T-cell (primary cell): ENCODE measurements at regions of chr1 and their contacts with region 1.

Region 1: GRCh38 chr1:43073490-43074230 is 98.4 kb downstream of the EBNA1BP2 start:
- DNase-seq: peak; percentile 39 to 88 (median 67)
- ATAC-seq: peak; percentile 80 to 90 (median 86)
- H3K4me3 ChIP-seq: no peak overlapping the region
- H3K4me3 Mint-ChIP-seq: no peak overlapping the region
- H3K27ac ChIP-seq: no peak overlapping the region
- H3K27ac Mint-ChIP-seq: no peak overlapping the region
- H3K4me1 ChIP-seq: peaks cover 0 to 8% of the 10 kb centered on the region in 2 experiments
- H3K4me1 Mint-ChIP-seq: peaks cover 4 to 10% (median 6%) of the 10 kb centered on the region in 3 donors
- H3K27me3 ChIP-seq: no peaks in the 10 kb centered on the region
- H3K27me3 Mint-ChIP-seq: no peaks in the 10 kb centered on the region

Region 2: DNA sequence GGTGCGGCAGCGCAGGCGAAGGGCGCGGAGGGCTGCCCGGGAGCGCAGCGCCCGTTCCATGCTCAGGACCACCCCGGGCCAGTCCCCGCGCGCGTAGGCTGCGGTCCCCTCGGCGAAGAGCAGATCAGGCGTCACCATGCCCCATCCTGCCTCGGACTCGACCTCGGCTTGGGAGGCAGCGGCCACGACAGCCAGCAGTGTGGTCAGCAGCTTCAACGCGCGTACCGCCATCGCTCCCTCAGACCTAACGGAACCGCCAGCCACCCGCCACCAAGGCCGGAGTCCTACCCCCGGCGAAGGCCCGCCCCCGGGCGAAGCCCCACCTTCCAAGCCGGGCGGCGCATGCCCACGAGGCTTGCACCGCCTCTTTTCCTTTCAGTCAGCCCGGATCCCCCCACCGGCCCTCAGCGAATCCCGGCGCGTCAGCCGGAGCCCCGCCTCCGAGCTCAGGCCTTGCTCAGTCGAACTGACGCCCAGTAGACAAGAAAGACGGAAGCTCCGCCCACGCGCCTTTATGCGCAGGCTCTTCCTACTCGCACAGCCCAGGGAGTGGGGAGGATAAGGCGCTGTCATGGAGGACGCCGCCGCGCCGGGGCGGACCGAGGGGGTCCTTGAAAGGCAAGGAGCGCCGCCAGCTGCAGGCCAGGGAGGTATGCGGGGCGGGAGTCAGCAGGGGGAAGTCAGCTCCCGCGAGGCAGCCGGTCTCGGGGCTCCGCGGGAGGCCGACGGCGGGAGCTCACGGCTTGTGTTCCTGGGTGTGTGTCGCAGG is 306.7 kb before region 1 on chr1 and contains the starts of genes C1orf50 and P3H1:
- CTCF ChIA-PET with region 1: interaction called in 1 of 2 experiments, 10 read pairs
- POLR2A ChIA-PET with region 1: no interaction called
- DNase-seq: peak; percentile 99 to 100 (median 100)
- ATAC-seq: peak; percentile 92 to 96 (median 92)
- H3K4me3 ChIP-seq: peak within 1 kb of the TSS; percentile 81 to 86
- H3K4me3 Mint-ChIP-seq: no peak within 1 kb of the TSS
- H3K27ac ChIP-seq: peak within 1 kb of the TSS; percentile 66
- H3K27ac Mint-ChIP-seq: peak within 1 kb of the TSS; percentile 92
- H3K4me1 ChIP-seq: peaks cover 22 to 38% of the 10 kb centered on the region in 2 experiments
- H3K4me1 Mint-ChIP-seq: peaks cover 34 to 45% (median 36%) of the 10 kb centered on the region in 3 donors
- H3K27me3 ChIP-seq: no peaks in the 10 kb centered on the region
- H3K27me3 Mint-ChIP-seq: no peaks in the 10 kb centered on the region
- total RNA-seq, gene C1orf50: 12.4 to 15.3 (median 13.9) TPM
- total RNA-seq, gene P3H1: 23.5 to 62.9 (median 58.3) TPM

Region 3: DNA sequence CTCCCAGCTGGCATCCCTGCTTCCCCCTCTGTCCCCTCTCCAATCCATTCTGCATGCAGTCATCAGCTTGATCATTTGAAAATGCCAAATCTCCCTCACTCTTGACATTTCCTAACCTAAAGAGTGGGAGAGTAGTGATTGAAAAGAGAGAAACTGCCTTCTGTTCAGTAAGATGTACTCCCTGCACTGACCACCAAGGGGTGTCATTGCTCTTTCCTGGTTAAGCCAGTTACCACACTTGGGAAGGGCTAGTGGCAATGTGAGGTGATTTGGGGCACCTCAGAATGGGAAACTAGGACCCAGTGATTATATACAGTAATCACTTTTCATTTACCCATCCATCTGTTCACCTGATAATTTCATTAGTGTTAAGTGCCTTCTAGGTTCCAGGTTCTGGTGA is 295.8 kb before region 1 on chr1:
- CTCF ChIA-PET with region 1: interaction called, 5 to 33 read pairs
- POLR2A ChIA-PET with region 1: no interaction called
- DNase-seq: peak in 11 of 35 experiments; percentile 7 to 57 (median 17)
- ATAC-seq: peak; percentile 37 to 62 (median 39)
- H3K4me3 ChIP-seq: no peak overlapping the region
- H3K4me3 Mint-ChIP-seq: no peak overlapping the region
- H3K27ac ChIP-seq: no peak overlapping the region
- H3K27ac Mint-ChIP-seq: peak overlapping the region in 1 of 2 donors; percentile 55
- H3K4me1 ChIP-seq: no peaks in the 10 kb centered on the region
- H3K4me1 Mint-ChIP-seq: peaks cover 9 to 16% (median 12%) of the 10 kb centered on the region in 3 donors
- H3K27me3 ChIP-seq: no peaks in the 10 kb centered on the region
- H3K27me3 Mint-ChIP-seq: no peaks in the 10 kb centered on the region

Region 4: DNA sequence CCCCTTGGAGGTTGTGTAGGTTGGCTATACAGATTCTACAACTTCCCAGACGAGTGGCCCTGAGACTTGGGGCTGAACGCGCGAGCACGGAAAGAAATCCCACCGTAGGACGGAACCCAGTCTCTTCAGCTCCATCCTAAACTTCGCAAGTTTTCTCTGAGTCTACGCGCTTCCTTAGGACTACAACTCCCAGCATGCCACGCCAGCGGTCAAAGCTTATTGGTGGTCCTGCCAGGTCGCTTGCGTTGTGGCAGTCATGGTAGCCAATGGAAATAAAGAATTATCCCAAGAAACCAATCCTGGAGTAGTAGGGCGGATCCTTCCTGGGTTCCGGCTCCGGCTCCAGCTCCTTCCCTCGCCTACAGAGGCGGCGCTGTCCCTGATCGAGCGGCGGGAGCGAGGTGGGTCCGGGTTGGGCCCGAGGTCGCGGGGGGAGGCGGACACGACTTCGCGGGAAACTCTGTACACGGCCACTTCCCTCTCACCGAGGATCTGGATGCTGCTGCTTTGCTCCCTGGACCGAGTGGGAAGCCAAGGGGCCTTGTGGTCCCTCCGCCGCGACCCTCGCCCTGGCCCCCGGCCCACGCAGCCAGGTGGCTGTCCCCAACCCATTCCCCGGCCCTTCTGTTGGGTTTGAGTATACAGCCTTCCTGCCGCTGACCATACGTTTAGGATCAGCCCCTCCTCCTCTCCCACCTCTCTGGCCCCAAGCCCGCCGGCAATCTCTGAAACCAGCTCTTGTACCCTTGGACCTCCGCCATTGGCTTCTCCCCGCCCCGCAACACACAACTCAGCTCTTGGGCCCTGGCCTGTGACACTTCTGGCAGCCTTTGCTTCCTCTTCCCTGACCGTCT is 227.2 kb before region 1 on chr1 and contains the start of gene ZNF691:
- CTCF ChIA-PET with region 1: interaction called in 1 of 2 experiments, 11 read pairs
- POLR2A ChIA-PET with region 1: interaction called in 1 of 2 experiments, 4 read pairs
- DNase-seq: peak; percentile 65 to 94 (median 84)
- ATAC-seq: peak; percentile 98 to 99 (median 98)
- H3K4me3 ChIP-seq: peak within 1 kb of the TSS; percentile 72 to 90
- H3K4me3 Mint-ChIP-seq: peak within 1 kb of the TSS; percentile 86 to 94 (median 89)
- H3K27ac ChIP-seq: peak within 1 kb of the TSS; percentile 32
- H3K27ac Mint-ChIP-seq: peak within 1 kb of the TSS; percentile 73 to 94
- H3K4me1 ChIP-seq: peaks cover 4 to 21% of the 10 kb centered on the region in 2 experiments
- H3K4me1 Mint-ChIP-seq: peaks cover 35 to 40% (median 36%) of the 10 kb centered on the region in 3 donors
- H3K27me3 ChIP-seq: no peaks in the 10 kb centered on the region
- H3K27me3 Mint-ChIP-seq: no peaks in the 10 kb centered on the region
- total RNA-seq, gene ZNF691: 4.7 to 14.9 (median 13.0) TPM

Region 5: GRCh38 chr1:42913426-42914091 is 160.1 kb before region 1 on chr1:
- CTCF ChIA-PET with region 1: interaction called, 48 to 290 read pairs
- POLR2A ChIA-PET with region 1: interaction called in 1 of 2 experiments, 8 read pairs
- DNase-seq: peak in 30 of 35 experiments; percentile 30 to 87 (median 57)
- ATAC-seq: peak; percentile 66 to 84 (median 78)
- H3K4me3 ChIP-seq: no peak overlapping the region
- H3K4me3 Mint-ChIP-seq: no peak overlapping the region
- H3K27ac ChIP-seq: no peak overlapping the region
- H3K27ac Mint-ChIP-seq: no peak overlapping the region
- H3K4me1 ChIP-seq: no peaks in the 10 kb centered on the region
- H3K4me1 Mint-ChIP-seq: peaks cover 0 to 4% (median 4%) of the 10 kb centered on the region in 3 donors
- H3K27me3 ChIP-seq: peaks cover 0 to 6% of the 10 kb centered on the region in 2 experiments
- H3K27me3 Mint-ChIP-seq: no peaks in the 10 kb centered on the region

Region 6: GRCh38 chr1:42924082-42924850 is 149.4 kb before region 1 on chr1:
- CTCF ChIA-PET with region 1: interaction called, 14 to 97 read pairs
- POLR2A ChIA-PET with region 1: no interaction called
- DNase-seq: peak; percentile 72 to 93 (median 88)
- ATAC-seq: peak; percentile 91 to 93 (median 92)
- H3K4me3 ChIP-seq: peak overlapping the region; percentile 83 to 90
- H3K4me3 Mint-ChIP-seq: peak overlapping the region; percentile 82 to 95 (median 86)
- H3K27ac ChIP-seq: peak overlapping the region; percentile 75
- H3K27ac Mint-ChIP-seq: peak overlapping the region; percentile 94 to 97
- H3K4me1 ChIP-seq: peaks cover 9 to 25% of the 10 kb centered on the region in 2 experiments
- H3K4me1 Mint-ChIP-seq: peaks cover 21 to 41% (median 34%) of the 10 kb centered on the region in 3 donors
- H3K27me3 ChIP-seq: no peaks in the 10 kb centered on the region
- H3K27me3 Mint-ChIP-seq: no peaks in the 10 kb centered on the region

Region 7: DNA sequence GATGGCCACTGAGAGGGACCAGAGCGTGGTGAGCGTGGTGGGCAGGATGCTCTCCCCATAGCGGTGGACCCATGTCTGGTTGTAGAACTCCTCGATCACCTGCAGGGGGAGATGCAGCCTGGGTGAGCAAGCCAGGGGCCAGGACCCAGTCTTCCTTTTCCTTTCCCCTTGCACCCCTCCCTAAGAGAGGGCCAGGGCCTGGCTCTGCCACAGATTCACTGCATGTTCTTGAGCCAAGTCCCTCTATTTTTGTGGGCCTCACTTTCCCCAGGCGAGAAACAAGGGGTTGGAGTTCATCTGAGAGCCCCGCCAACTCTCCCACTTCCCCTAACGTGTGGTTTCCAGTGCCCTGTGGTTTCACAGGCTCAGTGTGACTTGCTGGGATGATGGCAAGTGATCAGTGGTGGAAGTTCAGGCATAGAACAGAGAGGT is 142.5 kb before region 1 on chr1:
- CTCF ChIA-PET with region 1: interaction called, 5 to 11 read pairs
- POLR2A ChIA-PET with region 1: no interaction called
- DNase-seq: peak in 33 of 35 experiments; percentile 37 to 81 (median 49)
- ATAC-seq: peak; percentile 21 to 55 (median 40)
- H3K4me3 ChIP-seq: peak overlapping the region; percentile 21 to 32
- H3K4me3 Mint-ChIP-seq: peak overlapping the region; percentile 65 to 85 (median 66)
- H3K27ac ChIP-seq: peak overlapping the region; percentile 83
- H3K27ac Mint-ChIP-seq: peak overlapping the region; percentile 94 to 97
- H3K4me1 ChIP-seq: peaks cover 33 to 77% of the 10 kb centered on the region in 2 experiments
- H3K4me1 Mint-ChIP-seq: peaks cover 56 to 76% (median 68%) of the 10 kb centered on the region in 3 donors
- H3K27me3 ChIP-seq: no peaks in the 10 kb centered on the region
- H3K27me3 Mint-ChIP-seq: no peaks in the 10 kb centered on the region